H1 (cell line): ENCODE measurements at regions of chr17 and their contacts with region 1.

Region 1: GRCh38 chr17:63798572-63799106 is 24.7 kb downstream of the DDX42 start:
- DNase-seq: peak in 1 of 2 experiments; percentile 23
- H3K4me3 ChIP-seq: no peak overlapping the region
- H3K27ac ChIP-seq: no peak overlapping the region
- H3K4me1 ChIP-seq: no peaks in the 10 kb centered on the region
- H3K27me3 ChIP-seq: no peaks in the 10 kb centered on the region
- CTCF ChIP-seq: no peak
- EP300 ChIP-seq: no peak
- POLR2A ChIP-seq: no peak
- RAD21 ChIP-seq: no peak

Region 2: DNA sequence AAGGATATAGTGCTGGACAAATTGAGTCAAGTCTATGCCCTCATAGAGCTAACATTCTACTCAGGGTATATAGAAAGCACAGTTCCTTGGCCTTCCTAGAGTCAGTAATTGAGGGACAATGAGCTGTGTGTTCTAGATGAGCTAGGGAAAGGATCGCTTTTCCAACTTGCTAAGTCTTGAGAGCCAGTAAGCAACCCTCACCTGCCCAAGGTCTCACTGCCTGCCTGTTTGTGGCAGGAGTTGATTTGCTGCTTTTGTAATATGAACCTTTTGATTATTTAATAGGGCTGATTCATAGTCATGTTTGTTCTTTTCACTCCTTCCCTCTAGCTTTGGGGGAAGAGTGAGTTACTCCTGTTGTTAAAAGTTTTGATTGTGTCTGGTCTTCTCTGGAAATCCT is 18.1 kb before region 1 on chr17:
- CTCF ChIA-PET with region 1: interaction called, 3 read pairs
- POLR2A ChIA-PET with region 1: interaction called, 34 read pairs
- DNase-seq: no peak
- H3K4me3 ChIP-seq: no peak overlapping the region
- H3K27ac ChIP-seq: no peak overlapping the region
- H3K4me1 ChIP-seq: no peaks in the 10 kb centered on the region; a peak in 2 of 7 replicates
- H3K27me3 ChIP-seq: no peaks in the 10 kb centered on the region
- CTCF ChIP-seq: no peak
- EP300 ChIP-seq: no peak
- POLR2A ChIP-seq: no peak
- RAD21 ChIP-seq: no peak